H1 (cell line): ENCODE measurements at regions of chr12 and their contacts with region 1.

Region 1: GRCh38 chr12:124906606-124907261 is 7.7 kb downstream of the UBC start:
- DNase-seq: peak in 1 of 2 experiments; percentile 92
- H3K4me3 ChIP-seq: no peak overlapping the region
- H3K27ac ChIP-seq: no peak overlapping the region
- H3K4me1 ChIP-seq: peaks cover 0 to 6% (median 1%) of the 10 kb centered on the region in 4 experiments; a peak in 4 of 7 replicates
- H3K27me3 ChIP-seq: no peaks in the 10 kb centered on the region
- CTCF ChIP-seq: peak; percentile 62 to 100 (median 97)
- EP300 ChIP-seq: no peak
- POLR2A ChIP-seq: no peak
- RAD21 ChIP-seq: peak; percentile 85 to 92

Region 2: GRCh38 chr12:124786061-124786964 is 120.4 kb before region 1 on chr12:
- CTCF ChIA-PET with region 1: interaction called, 4 read pairs
- POLR2A ChIA-PET with region 1: interaction called, 10 read pairs
- DNase-seq: peak; percentile 53 to 88
- H3K4me3 ChIP-seq: peak overlapping the region; percentile 29 to 50 (median 38); a peak in 5 of 8 replicates
- H3K27ac ChIP-seq: no peak overlapping the region
- H3K4me1 ChIP-seq: peaks cover 0 to 5% (median 1%) of the 10 kb centered on the region in 4 experiments; a peak in 3 of 7 replicates
- H3K27me3 ChIP-seq: no peaks in the 10 kb centered on the region
- CTCF ChIP-seq: no peak
- EP300 ChIP-seq: no peak
- POLR2A ChIP-seq: peak in 1 of 2 experiments; percentile 61; a peak in 2 of 3 replicates
- RAD21 ChIP-seq: no peak

Region 3: DNA sequence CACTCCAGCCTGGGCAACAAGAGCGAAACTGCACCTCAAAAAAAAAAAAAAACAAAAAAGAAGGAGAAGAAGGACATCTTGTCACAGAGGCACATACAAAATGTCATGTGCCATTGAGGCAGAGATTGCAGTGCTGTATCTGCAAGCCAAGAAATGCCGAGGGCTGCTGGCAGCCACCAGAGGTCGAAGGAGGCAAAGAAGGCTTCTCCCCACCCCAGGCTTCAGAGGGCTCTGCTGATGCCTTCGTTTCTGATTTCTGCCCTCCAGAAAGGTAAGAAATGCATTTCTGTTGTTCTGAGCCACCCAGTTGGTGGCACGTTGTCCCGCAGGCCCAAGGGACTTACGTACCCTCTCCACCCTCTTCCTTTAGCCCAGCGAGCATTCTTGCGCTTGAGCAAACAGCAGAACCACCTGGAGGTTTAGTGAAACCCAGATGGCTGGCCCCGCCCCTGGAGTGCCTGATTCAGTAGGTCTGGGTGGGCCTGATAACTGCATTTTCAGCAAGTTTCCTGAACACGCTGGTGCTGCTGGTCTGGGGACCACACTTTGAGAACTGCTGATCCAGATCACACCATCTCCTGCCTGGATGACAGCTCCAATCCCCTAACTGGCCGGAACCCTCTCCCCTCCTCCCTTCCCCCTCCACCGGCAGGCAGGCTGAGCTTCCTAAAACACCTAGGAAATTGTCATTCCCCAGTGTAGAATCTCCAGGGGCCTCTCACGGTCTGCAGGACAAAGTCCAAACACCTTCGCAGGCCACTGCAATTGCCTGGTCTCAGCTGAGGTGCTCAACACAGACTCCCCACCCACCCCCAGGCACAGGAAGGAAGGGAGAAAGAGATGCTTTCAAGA is 21.9 kb before region 1 on chr12:
- CTCF ChIA-PET with region 1: interaction called, 25 read pairs
- POLR2A ChIA-PET with region 1: interaction called, 6 read pairs
- DNase-seq: no peak
- H3K4me3 ChIP-seq: no peak overlapping the region
- H3K27ac ChIP-seq: no peak overlapping the region
- H3K4me1 ChIP-seq: peaks cover 0 to 14% (median 7%) of the 10 kb centered on the region in 4 experiments; a peak in 6 of 7 replicates
- H3K27me3 ChIP-seq: no peaks in the 10 kb centered on the region
- CTCF ChIP-seq: no peak
- EP300 ChIP-seq: no peak
- POLR2A ChIP-seq: no peak
- RAD21 ChIP-seq: no peak

Region 4: GRCh38 chr12:124927201-124928094 is 20.7 kb after region 1 on chr12:
- CTCF ChIA-PET with region 1: interaction called, 141 read pairs
- POLR2A ChIA-PET with region 1: interaction called, 15 read pairs
- DNase-seq: peak in 1 of 2 experiments; percentile 99
- H3K4me3 ChIP-seq: peak overlapping the region; percentile 82 to 99 (median 98)
- H3K27ac ChIP-seq: peak overlapping the region; percentile 72; the same call in 1 of the 2 replicates
- H3K4me1 ChIP-seq: peaks cover 0 to 9% (median 1%) of the 10 kb centered on the region in 4 experiments; a peak in 4 of 7 replicates
- H3K27me3 ChIP-seq: no peaks in the 10 kb centered on the region
- CTCF ChIP-seq: peak in 1 of 3 experiments; percentile 6; a peak in 1 of 4 replicates
- EP300 ChIP-seq: no peak
- POLR2A ChIP-seq: no peak
- RAD21 ChIP-seq: 0 out of 4 replicates have a peak, but pooled peaks of 1 of the 2 experiments have one; percentile 3

Region 5: DNA sequence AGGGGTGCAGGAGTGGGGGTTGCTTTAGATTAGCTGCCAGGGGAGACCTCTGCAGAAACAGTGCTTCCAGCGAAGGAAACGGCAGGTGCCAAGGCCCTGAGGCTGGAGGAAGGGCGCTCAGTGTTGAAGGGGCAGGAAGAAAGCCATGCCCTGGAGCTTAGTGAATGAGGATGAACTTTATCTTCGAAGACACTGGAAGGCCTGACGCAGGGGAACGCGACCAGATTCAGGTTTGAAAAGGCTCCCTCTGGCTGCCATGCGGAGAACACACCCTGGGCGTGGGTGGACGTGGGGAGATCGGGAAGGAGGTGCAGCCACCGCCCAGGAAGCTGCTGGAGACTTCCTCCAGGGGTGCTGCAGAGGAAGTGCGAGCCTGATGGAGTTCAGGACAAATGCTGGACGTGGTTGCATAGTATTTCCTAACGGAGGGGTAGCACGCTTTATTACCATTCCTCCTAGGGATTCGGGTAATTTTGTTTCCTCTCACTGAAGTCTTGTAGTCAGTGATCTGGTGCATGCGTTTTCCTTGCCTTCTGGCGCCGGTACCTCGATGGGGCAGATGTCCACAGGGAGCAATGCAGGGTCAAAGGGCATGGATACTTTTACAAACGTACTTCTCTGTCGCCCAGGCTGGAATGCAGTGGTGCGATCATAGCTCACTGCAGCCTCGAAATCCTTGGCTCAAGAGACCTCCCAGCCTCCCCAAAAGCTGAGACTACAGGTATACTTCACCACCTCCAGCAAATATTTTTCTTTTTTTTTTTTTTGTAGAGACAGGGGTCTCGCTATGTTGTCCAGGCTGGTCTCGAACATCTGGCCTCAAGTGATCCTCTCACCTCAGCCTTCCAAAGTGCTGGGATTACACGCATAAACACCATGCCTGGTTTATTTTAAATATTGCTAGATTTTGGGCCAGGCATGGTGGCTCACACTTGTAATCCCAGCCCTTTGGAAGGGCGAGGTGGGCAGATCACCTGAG is 34.1 kb after region 1 on chr12:
- CTCF ChIA-PET with region 1: interaction called, 141 read pairs
- POLR2A ChIA-PET with region 1: interaction called, 18 read pairs
- DNase-seq: peak; percentile 85 to 88
- H3K4me3 ChIP-seq: peak overlapping the region; percentile 64 to 83 (median 72); a peak in 6 of 8 replicates
- H3K27ac ChIP-seq: no peak overlapping the region
- H3K4me1 ChIP-seq: peaks cover 0 to 4% (median 2%) of the 10 kb centered on the region in 4 experiments; a peak in 2 of 7 replicates
- H3K27me3 ChIP-seq: no peaks in the 10 kb centered on the region
- CTCF ChIP-seq: peak; percentile 85 to 97 (median 87)
- EP300 ChIP-seq: no peak
- POLR2A ChIP-seq: 0 out of 3 replicates have a peak, but pooled peaks of 1 of the 2 experiments have one; percentile 10
- RAD21 ChIP-seq: peak; percentile 45 to 52

Region 6: GRCh38 chr12:125006206-125006764 is 99.6 kb after region 1 on chr12:
- CTCF ChIA-PET with region 1: no interaction called
- POLR2A ChIA-PET with region 1: no interaction called
- DNase-seq: no peak
- H3K4me3 ChIP-seq: no peak overlapping the region
- H3K27ac ChIP-seq: no peak overlapping the region
- H3K4me1 ChIP-seq: no peaks in the 10 kb centered on the region
- H3K27me3 ChIP-seq: no peaks in the 10 kb centered on the region
- CTCF ChIP-seq: no peak
- EP300 ChIP-seq: no peak
- POLR2A ChIP-seq: no peak
- RAD21 ChIP-seq: no peak

Region 7: DNA sequence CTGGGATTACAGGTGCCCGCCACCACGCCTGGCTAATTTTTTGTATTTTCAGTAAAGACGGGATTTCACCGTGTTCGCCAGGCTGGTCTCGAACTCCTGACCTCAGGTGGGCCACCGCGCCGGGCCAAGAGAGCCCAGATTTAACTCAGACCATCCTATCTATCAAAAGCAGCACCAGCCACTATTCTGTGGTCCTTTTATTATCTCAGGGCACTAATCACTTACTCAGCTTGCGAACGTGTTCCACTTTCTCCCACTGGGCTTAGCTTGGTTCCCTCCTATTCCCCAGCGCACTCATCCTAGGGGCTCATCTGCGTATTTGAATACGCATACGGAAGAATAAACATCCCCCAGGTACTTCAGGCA is 142.3 kb after region 1 on chr12:
- CTCF ChIA-PET with region 1: no interaction called
- POLR2A ChIA-PET with region 1: no interaction called
- DNase-seq: no peak
- H3K4me3 ChIP-seq: peak overlapping the region; percentile 36 to 63 (median 53); a peak in 7 of 8 replicates
- H3K27ac ChIP-seq: no peak overlapping the region
- H3K4me1 ChIP-seq: no peaks in the 10 kb centered on the region; a peak in 1 of 7 replicates
- H3K27me3 ChIP-seq: no peaks in the 10 kb centered on the region
- CTCF ChIP-seq: 0 out of 4 replicates have a peak, but pooled peaks of 1 of the 3 experiments have one; percentile 1
- EP300 ChIP-seq: no peak
- POLR2A ChIP-seq: no peak
- RAD21 ChIP-seq: no peak